ENCODE measurements at regions of chr20 and their contacts with region 1.

Region 1: GRCh38 chr20:44833437-44833836 is 23.1 kb upstream of the RIMS4 start:
- DNase-seq: no peak
- ATAC-seq: no peak
- H3K4me3 ChIP-seq: no peak overlapping the region
- H3K27ac ChIP-seq: no peak overlapping the region
- H3K4me1 ChIP-seq: no peaks in the 10 kb centered on the region
- H3K27me3 ChIP-seq: peaks cover 25% of the 10 kb centered on the region
- CTCF ChIP-seq: no peak
- POLR2A ChIP-seq: no peak
- RAD21 ChIP-seq: no peak

Region 2: GRCh38 chr20:44601801-44602204 is 231.6 kb before region 1 on chr20:
- CTCF ChIA-PET with region 1: no interaction called
- POLR2A ChIA-PET with region 1: no interaction called
- dilution Hi-C with region 1: no loop called
- in situ Hi-C with region 1: no loop called
- intact Hi-C with region 1: no loop called
- DNase-seq: peak; percentile 87
- ATAC-seq: peak; percentile 84
- H3K4me3 ChIP-seq: no peak overlapping the region
- H3K27ac ChIP-seq: peak overlapping the region; percentile 82; the same call in 1 of the 2 replicates
- H3K4me1 ChIP-seq: peaks cover 35% of the 10 kb centered on the region
- H3K27me3 ChIP-seq: no peaks in the 10 kb centered on the region
- CTCF ChIP-seq: no peak
- POLR2A ChIP-seq: no peak
- RAD21 ChIP-seq: no peak

Region 3: DNA sequence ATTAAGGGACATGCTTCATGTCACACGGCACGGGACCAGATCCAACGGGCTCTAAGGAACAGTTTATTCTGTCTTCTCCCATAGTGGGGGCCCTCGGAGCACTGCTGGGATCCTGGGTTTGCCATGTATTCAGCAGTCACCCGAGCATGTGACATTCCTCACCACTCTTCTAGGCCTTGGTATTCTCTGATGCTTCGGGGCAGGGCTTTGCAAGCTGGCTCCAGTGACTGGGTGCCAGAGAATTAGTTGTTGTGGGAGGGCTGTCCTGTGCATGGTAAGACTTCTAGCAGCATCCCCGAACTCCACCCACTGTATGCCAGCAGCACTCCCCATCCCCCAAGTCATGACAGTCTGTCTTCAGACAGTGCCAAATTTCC is 112.8 kb before region 1 on chr20:
- CTCF ChIA-PET with region 1: no interaction called
- POLR2A ChIA-PET with region 1: no interaction called
- dilution Hi-C with region 1: no loop called
- in situ Hi-C with region 1: no loop called
- intact Hi-C with region 1: no loop called
- DNase-seq: peak; percentile 25
- ATAC-seq: peak; percentile 75
- H3K4me3 ChIP-seq: no peak overlapping the region
- H3K27ac ChIP-seq: peak overlapping the region; percentile 39; the same call in 1 of the 2 replicates
- H3K4me1 ChIP-seq: peaks cover 5% of the 10 kb centered on the region; the same call in 1 of the 2 replicates
- H3K27me3 ChIP-seq: peaks cover 4% of the 10 kb centered on the region; the same call in 1 of the 2 replicates
- CTCF ChIP-seq: no peak
- POLR2A ChIP-seq: no peak
- RAD21 ChIP-seq: no peak

Region 4: DNA sequence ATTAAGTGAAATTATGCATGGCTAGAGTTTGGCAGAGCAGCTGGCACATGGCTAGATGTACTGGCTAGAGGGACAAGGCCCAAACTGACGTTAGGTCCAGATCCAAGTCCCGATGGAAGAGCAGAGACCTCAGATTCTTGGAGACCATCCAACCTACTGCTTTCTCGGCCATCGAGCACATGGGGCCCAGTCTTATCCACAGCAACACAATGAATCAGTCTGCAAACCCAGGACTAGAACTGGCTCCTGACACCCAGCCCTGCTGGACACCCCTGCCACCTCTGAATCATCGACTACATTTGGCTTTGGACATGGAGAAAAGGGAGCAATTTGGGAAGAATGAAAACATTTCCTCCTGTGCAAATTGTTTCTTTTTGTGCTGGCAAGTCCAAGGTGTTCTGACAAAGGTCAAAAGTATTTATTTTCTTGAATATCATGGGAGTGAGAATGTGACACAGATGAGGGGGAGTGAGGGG is 28.1 kb after region 1 on chr20:
- CTCF ChIA-PET with region 1: no interaction called
- POLR2A ChIA-PET with region 1: no interaction called
- dilution Hi-C with region 1: no loop called
- in situ Hi-C with region 1: no loop called
- intact Hi-C with region 1: no loop called
- DNase-seq: peak; percentile 18
- ATAC-seq: peak; percentile 53
- H3K4me3 ChIP-seq: no peak overlapping the region
- H3K27ac ChIP-seq: no peak overlapping the region
- H3K4me1 ChIP-seq: 0 out of 2 replicates have a peak, but pooled peaks cover 2% of the 10 kb centered on the region
- H3K27me3 ChIP-seq: peaks cover 9% of the 10 kb centered on the region
- CTCF ChIP-seq: no peak
- POLR2A ChIP-seq: no peak
- RAD21 ChIP-seq: no peak

Region 5: GRCh38 chr20:44912189-44912588 is 78.8 kb after region 1 on chr20:
- CTCF ChIA-PET with region 1: no interaction called
- POLR2A ChIA-PET with region 1: interaction called, 11 read pairs
- dilution Hi-C with region 1: no loop called
- in situ Hi-C with region 1: no loop called
- intact Hi-C with region 1: no loop called
- DNase-seq: no peak
- ATAC-seq: no peak
- H3K4me3 ChIP-seq: no peak overlapping the region
- H3K27ac ChIP-seq: no peak overlapping the region
- H3K4me1 ChIP-seq: peaks cover 4% of the 10 kb centered on the region
- H3K27me3 ChIP-seq: no peaks in the 10 kb centered on the region
- CTCF ChIP-seq: no peak
- POLR2A ChIP-seq: no peak
- RAD21 ChIP-seq: no peak

Measured in IMR-90 (cell line).